Mammary epithelial cell (primary cell): ENCODE measurements at regions of chr3 and their contacts with region 1.

Region 1: DNA sequence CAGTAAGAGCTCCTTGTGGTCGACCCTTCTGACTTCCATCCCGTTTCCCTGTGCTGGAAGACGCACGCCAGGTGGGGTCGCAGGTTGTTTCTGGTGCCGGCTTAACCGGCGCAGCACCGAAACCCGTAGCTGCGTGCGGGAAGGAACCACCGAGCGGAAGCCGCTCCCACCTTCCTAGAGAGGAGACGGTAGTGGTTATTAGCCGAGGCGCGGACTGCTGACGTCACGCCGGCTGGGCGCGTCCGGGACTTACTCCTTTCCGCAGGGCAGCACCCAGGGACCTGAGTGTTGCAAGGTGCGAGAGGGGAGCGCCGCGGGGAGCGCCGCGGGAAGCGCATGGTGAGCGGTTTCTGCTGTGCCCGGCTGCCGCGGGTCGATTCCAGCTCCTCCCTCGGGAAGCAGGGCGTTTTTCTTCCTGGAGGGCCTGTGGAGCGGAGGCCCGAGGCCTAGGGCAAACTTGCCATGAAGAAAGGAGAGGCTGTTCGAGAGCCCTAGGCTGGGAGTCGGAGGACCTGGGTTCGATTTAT is at the start of gene ZNF501:
- DNase-seq: peak; percentile 88
- H3K4me3 ChIP-seq: peak within 1 kb of the TSS; percentile 61 to 67 (median 64)
- H3K27ac ChIP-seq: peak within 1 kb of the TSS; percentile 33
- H3K4me1 ChIP-seq: no peaks in the 10 kb centered on the region
- H3K27me3 ChIP-seq: no peaks in the 10 kb centered on the region
- CTCF ChIP-seq: no peak
- total RNA-seq, gene ZNF501: 2.9 to 5.3 TPM

Region 2: GRCh38 chr3:44712455-44713075 is 16.9 kb before region 1 on chr3 and contains the start of gene ZNF502:
- CTCF ChIA-PET with region 1: no interaction called
- dilution Hi-C with region 1: no loop called
- in situ Hi-C with region 1: no loop called
- intact Hi-C with region 1: loop called (anchors 1 kb)
- DNase-seq: peak; percentile 80
- H3K4me3 ChIP-seq: peak within 1 kb of the TSS; percentile 72 to 88 (median 81)
- H3K27ac ChIP-seq: peak within 1 kb of the TSS; percentile 4
- H3K4me1 ChIP-seq: no peaks in the 10 kb centered on the region
- H3K27me3 ChIP-seq: no peaks in the 10 kb centered on the region
- CTCF ChIP-seq: peak; percentile 19 to 50
- total RNA-seq, gene ZNF502: 6.0 to 6.1 TPM

Region 3: GRCh38 chr3:44893097-44893496 is 163.7 kb after region 1 on chr3:
- CTCF ChIA-PET with region 1: no interaction called
- dilution Hi-C with region 1: no loop called
- in situ Hi-C with region 1: no loop called
- intact Hi-C with region 1: no loop called
- DNase-seq: peak; percentile 89
- H3K4me3 ChIP-seq: no peak overlapping the region
- H3K27ac ChIP-seq: peak overlapping the region; percentile 52
- H3K4me1 ChIP-seq: peaks cover 11% of the 10 kb centered on the region
- H3K27me3 ChIP-seq: no peaks in the 10 kb centered on the region
- CTCF ChIP-seq: no peak